Left colon (tissue), 2 donors: ENCODE measurements at regions of chr11 and their contacts with region 1.

Region 1: GRCh38 chr11:65418711-65419459 is 3.7 kb upstream of the NEAT1 start:
- DNase-seq: peak; percentile 97 to 99
- ATAC-seq: peak; percentile 40

Region 2: DNA sequence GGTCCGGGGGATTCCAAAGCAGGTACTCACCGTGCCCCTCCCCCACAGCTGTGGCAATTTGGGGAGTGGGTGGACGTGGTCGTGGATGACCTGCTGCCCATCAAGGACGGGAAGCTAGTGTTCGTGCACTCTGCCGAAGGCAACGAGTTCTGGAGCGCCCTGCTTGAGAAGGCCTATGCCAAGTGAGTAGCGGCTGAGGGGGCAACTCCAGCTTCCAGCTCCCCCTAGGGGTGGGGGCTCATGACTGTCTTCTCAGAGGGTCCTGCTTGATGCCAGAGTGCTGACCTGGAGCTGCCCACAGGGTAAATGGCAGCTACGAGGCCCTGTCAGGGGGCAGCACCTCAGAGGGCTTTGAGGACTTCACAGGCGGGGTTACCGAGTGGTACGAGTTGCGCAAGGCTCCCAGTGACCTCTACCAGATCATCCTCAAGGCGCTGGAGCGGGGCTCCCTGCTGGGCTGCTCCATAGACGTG is 233.0 kb before region 1 on chr11:
- intact Hi-C with region 1: no loop called
- DNase-seq: no peak
- ATAC-seq: no peak

Region 3: DNA sequence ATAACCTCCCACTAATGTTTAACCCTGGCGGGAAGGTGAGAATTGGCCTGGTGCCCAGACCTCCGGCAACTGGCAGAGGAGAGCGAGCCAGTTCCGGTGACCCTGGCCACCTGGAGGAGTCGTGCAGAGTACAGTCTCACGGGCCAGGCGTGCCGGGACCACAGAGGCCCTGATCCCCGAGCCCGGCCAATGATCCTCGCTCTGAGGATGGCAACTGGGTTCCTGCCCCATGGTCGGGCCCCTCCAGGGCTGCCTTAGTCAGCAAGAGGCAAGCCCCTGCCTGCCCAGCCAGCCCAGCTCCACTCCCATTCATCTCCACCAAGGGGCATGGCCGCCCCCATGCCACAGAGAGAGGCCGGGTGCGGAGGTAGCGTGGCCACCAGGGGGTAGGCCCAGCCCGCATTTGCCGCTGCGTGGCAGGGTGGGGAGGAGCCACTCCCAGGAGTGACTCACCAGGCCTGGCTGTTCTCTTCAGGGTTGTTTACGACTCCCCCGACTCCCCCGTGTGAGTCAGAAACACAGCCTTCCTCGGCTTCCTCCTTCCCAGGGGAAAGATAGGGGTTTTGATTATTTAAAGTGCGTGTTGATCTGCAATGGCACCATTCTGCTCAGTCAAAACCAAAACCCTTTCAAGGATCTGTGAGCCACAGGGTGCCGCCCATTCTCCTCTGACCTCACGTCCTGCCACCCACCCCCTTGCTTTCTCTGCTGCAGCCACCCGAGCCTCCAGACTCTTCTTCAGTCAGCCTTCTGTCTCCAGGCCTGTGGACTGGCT is 36.7 kb before region 1 on chr11 and contains the start of gene SLC25A45:
- intact Hi-C with region 1: loop called in 1 of 2 experiments (anchors 5 kb)
- DNase-seq: peak; percentile 90 to 95
- ATAC-seq: peak; percentile 82
- total RNA-seq, gene SLC25A45: 5.8 to 8.4 TPM

Region 4: GRCh38 chr11:65497141-65498041 is 78.5 kb after region 1 on chr11:
- intact Hi-C with region 1: loop called (anchors 5 kb)
- DNase-seq: peak; percentile 98 to 99
- ATAC-seq: peak; percentile 68

Region 5: DNA sequence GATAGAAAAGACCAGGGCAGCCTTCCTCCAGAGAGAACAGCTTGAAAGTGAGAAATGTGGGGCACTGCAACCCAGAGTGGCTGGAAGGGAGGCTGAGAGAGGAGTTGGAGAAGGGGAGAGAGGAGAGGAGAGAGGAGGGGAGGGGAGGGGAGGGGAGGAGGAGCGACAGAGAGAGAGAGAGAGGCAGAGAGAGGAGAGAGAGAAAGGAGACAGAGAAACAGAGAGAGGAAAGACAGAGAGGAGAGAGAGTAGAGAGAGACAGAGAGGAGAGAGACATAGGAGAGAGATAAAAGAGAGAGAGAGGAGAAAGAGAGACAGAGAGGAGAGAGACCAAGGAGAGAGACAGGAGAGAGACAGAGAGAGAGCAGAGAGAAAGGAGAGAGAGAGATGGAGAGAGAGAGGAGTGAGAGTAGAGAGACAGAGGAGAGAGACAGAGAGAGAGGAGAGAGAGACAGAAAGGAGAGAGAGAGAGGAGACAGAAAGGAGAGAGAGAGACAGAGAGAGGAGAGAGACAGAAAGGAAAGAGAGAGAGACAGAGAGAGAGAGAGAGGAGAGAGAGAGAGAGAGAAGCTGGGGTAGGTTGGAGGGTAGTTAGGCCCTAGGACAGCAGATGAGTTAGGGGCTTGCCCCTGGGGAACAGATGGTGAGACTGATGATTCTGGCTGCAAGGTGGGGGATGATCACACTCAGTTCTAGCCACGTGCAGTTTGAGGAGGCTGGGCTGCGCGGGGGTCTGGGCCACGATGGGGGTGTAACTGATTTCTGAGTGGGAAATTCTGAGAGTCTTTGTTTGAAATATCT is 97.5 kb after region 1 on chr11:
- intact Hi-C with region 1: loop called (anchors 5 kb)
- DNase-seq: no peak
- ATAC-seq: no peak